OCI-LY7 (cell line): ENCODE measurements at regions of chr9 and their contacts with region 1.

Region 1: GRCh38 chr9:120619751-120620655 is 40.0 kb upstream of the CDK5RAP2 start:
- DNase-seq: peak; percentile 69
- H3K4me3 ChIP-seq: no peak overlapping the region
- H3K27ac ChIP-seq: no peak overlapping the region
- H3K4me1 ChIP-seq: no peaks in the 10 kb centered on the region
- CTCF ChIP-seq: peak; percentile 99

Region 2: GRCh38 chr9:120714088-120714845 is 94.3 kb after region 1 on chr9 and contains the start of gene MEGF9:
- CTCF ChIA-PET with region 1: no interaction called
- POLR2A ChIA-PET with region 1: no interaction called
- intact Hi-C with region 1: loop called (anchors 10 kb)
- DNase-seq: peak; percentile 98
- H3K4me3 ChIP-seq: peak within 1 kb of the TSS; percentile 86
- H3K27ac ChIP-seq: peak within 1 kb of the TSS; percentile 33
- H3K4me1 ChIP-seq: peaks cover 38% of the 10 kb centered on the region
- CTCF ChIP-seq: no peak
- total RNA-seq, gene MEGF9: 4.8 and 5.1 TPM in 2 replicates

Region 3: DNA sequence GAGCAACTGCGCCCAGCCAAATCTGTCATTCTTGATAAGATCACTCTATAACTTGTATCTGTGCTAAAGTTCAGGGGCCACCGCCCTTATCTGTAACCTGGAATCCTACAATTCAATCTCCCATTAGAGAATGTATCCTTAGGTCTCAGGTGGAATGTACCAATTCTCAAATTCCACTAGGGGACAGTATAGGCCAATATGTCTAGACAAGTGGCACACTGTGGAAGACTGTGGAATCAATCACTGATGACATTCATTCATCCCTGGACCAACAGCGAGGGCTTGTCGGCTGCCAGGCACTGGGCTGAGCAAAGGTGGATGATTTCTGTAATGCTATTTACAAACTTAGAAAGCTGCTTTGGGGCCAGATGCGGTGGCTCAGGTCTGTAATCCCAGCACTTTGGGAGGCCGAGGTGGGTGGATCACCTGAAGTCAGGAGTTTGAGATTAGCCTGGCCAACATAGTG is 123.0 kb after region 1 on chr9:
- CTCF ChIA-PET with region 1: no interaction called
- POLR2A ChIA-PET with region 1: interaction called, 6 read pairs
- intact Hi-C with region 1: loop called (anchors 5 kb)
- DNase-seq: peak; percentile 72
- H3K4me3 ChIP-seq: no peak overlapping the region
- H3K27ac ChIP-seq: no peak overlapping the region
- H3K4me1 ChIP-seq: no peaks in the 10 kb centered on the region
- CTCF ChIP-seq: peak; percentile 84

Region 4: GRCh38 chr9:120965344-120966012 is 345.5 kb after region 1 on chr9:
- CTCF ChIA-PET with region 1: no interaction called
- POLR2A ChIA-PET with region 1: no interaction called
- intact Hi-C with region 1: no loop called
- DNase-seq: no peak
- H3K4me3 ChIP-seq: no peak overlapping the region
- H3K27ac ChIP-seq: no peak overlapping the region
- H3K4me1 ChIP-seq: no peaks in the 10 kb centered on the region
- CTCF ChIP-seq: no peak

Region 5: GRCh38 chr9:121048618-121049017 is 428.6 kb after region 1 on chr9:
- CTCF ChIA-PET with region 1: no interaction called
- POLR2A ChIA-PET with region 1: no interaction called
- intact Hi-C with region 1: no loop called
- DNase-seq: no peak
- H3K4me3 ChIP-seq: no peak overlapping the region
- H3K27ac ChIP-seq: no peak overlapping the region
- H3K4me1 ChIP-seq: no peaks in the 10 kb centered on the region
- CTCF ChIP-seq: no peak